Activated T-helper 2 cell treated with anti-CD3 and anti-CD28 coated beads, Interferon-gamma antibody, Interleukin-2, Interleukin-4, amounts not matched to agents 10 μg/mL and 5 μg/mL and 100 μg/mL, durations not matched to agents 14 hours and 24 hours and 36 hours (primary cell): ENCODE measurements at regions of chr13 and their contacts with region 1.

Region 1: GRCh38 chr13:79451500-79451962 is 29.4 kb upstream of the NDFIP2 start:
- DNase-seq: peak; percentile 88
- H3K4me3 Mint-ChIP-seq: peak overlapping the region; percentile 75
- H3K27ac Mint-ChIP-seq: peak overlapping the region; percentile 97
- H3K4me1 Mint-ChIP-seq: peaks cover 80% of the 10 kb centered on the region
- H3K27me3 Mint-ChIP-seq: no peaks in the 10 kb centered on the region

Region 2: DNA sequence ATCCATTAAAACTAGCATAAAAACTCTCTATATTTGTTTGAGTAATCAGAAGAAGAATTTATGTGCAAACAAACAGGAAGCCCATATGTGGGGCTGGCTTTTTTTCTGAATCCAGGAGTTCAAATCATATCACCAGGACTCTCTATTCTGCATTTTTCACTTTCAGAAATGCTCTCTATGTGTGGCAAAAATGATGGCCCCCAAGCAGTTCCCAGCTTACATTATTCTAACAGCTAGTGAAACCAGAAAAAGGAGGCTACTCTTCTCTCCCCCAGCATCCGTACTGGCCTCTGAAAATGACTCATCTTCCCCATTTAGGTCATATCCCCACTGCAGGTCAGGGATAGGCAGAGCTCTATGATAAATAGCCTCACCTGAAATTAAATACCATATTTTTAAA is 65.8 kb before region 1 on chr13:
- intact Hi-C with region 1: loop called (anchors 2 kb)
- DNase-seq: no peak
- H3K4me3 Mint-ChIP-seq: no peak overlapping the region
- H3K27ac Mint-ChIP-seq: no peak overlapping the region
- H3K4me1 Mint-ChIP-seq: peaks cover 65% of the 10 kb centered on the region
- H3K27me3 Mint-ChIP-seq: no peaks in the 10 kb centered on the region

Region 3: GRCh38 chr13:79491715-79492114 is 40.2 kb after region 1 on chr13:
- intact Hi-C with region 1: loop called (anchors 2 kb)
- DNase-seq: no peak
- H3K4me3 Mint-ChIP-seq: peak overlapping the region; percentile 78
- H3K27ac Mint-ChIP-seq: peak overlapping the region; percentile 95
- H3K4me1 Mint-ChIP-seq: peaks cover 87% of the 10 kb centered on the region
- H3K27me3 Mint-ChIP-seq: no peaks in the 10 kb centered on the region